ENCODE measurements at regions of chr15 and their contacts with region 1.

Region 1: DNA sequence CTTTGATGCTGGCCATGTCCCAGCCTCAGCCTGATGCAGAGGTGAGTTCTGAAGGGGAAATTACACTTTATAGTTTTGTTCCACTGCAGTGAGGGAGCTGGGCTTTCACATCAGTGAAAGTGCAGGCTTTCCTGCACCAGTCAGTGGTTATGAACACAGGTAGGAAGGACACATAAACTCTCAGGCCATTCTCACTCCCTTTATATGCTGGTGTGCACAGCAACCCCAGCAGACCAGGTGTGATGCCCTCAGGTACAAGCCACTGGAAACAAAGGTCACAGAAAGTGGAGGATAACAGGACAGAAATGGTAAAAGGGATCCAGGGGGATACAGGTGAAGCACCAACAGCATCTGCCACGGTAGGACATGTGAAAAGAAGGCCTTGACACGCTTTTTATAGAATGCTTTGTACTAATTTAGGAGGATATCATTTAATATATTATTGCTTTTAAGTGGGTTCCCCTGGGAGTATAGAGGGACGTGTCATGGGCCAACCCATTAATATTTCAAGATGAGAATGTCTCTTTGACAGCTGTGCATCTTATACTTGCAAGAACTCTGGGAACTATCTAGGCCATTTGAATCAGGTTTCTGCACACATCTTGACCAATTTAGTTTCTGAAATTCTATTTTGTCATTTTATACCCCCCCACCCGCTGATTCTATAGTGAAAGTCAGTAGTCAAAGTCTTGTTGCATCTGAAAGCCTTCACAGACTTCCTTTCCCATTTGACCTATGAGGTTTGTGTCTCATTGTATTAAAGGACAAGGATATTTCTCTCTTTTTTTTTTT is 25.0 kb upstream of the BLM start:
- DNase-seq: no peak
- ATAC-seq: no peak
- H3K4me3 ChIP-seq: no peak overlapping the region
- H3K4me3 Mint-ChIP-seq: no peak overlapping the region
- H3K27ac ChIP-seq: no peak overlapping the region
- H3K27ac Mint-ChIP-seq: no peak overlapping the region
- H3K4me1 ChIP-seq: peaks cover 3% of the 10 kb centered on the region
- H3K4me1 Mint-ChIP-seq: peaks cover 13% of the 10 kb centered on the region
- H3K27me3 ChIP-seq: no peaks in the 10 kb centered on the region
- H3K27me3 Mint-ChIP-seq: no peaks in the 10 kb centered on the region
- CTCF ChIP-seq: no peak

Region 2: GRCh38 chr15:90519688-90520087 is 172.5 kb before region 1 on chr15:
- CTCF ChIA-PET with region 1: no interaction called
- POLR2A ChIA-PET with region 1: no interaction called
- intact Hi-C with region 1: loop called in 1 of 2 experiments (anchors 10 kb)
- DNase-seq: no peak
- ATAC-seq: no peak
- H3K4me3 ChIP-seq: no peak overlapping the region
- H3K4me3 Mint-ChIP-seq: no peak overlapping the region
- H3K27ac ChIP-seq: no peak overlapping the region
- H3K27ac Mint-ChIP-seq: no peak overlapping the region
- H3K4me1 ChIP-seq: no peaks in the 10 kb centered on the region
- H3K4me1 Mint-ChIP-seq: no peaks in the 10 kb centered on the region
- H3K27me3 ChIP-seq: no peaks in the 10 kb centered on the region
- H3K27me3 Mint-ChIP-seq: no peaks in the 10 kb centered on the region
- CTCF ChIP-seq: no peak

Region 3: GRCh38 chr15:90598031-90598577 is 94.1 kb before region 1 on chr15:
- CTCF ChIA-PET with region 1: no interaction called
- POLR2A ChIA-PET with region 1: no interaction called
- intact Hi-C with region 1: no loop called
- DNase-seq: peak in 2 of 9 experiments; percentile 14 to 47
- ATAC-seq: no peak
- H3K4me3 ChIP-seq: peak overlapping the region in 1 of 2 experiments; percentile 1
- H3K4me3 Mint-ChIP-seq: peak overlapping the region; percentile 40
- H3K27ac ChIP-seq: peak overlapping the region; percentile 42 to 81
- H3K27ac Mint-ChIP-seq: peak overlapping the region; percentile 99
- H3K4me1 ChIP-seq: peaks cover 74% of the 10 kb centered on the region
- H3K4me1 Mint-ChIP-seq: peaks cover 83% of the 10 kb centered on the region
- H3K27me3 ChIP-seq: no peaks in the 10 kb centered on the region
- H3K27me3 Mint-ChIP-seq: no peaks in the 10 kb centered on the region
- CTCF ChIP-seq: no peak

Measured in CD8-positive, alpha-beta T cell (primary cell).